ENCODE measurements at regions of chr5 and their contacts with region 1.

Region 1: DNA sequence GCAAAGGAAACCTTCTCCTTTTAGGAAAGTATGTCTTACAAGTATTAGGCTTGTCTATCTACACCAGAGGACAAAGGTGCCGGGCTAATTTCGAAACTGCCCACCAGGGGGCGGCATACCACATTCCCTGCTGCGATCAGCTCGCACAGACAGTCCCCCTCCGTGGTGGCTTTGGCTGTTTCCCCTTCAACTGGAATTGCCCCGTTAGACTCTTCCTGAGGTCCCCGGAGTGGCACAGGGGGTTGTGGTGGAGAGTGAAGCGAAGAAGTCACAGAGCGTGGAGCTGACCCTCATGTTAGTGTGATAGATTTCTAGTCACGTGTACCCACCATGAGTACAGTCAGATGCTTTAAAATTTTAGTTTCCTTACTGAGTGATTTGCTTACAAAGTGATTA is 17.5 kb downstream of the PTTG1 start:
- DNase-seq: peak; percentile 69
- ATAC-seq: peak; percentile 95
- H3K4me3 ChIP-seq: peak overlapping the region; percentile 13 to 60 (median 39)
- H3K27ac ChIP-seq: no peak overlapping the region
- H3K4me1 ChIP-seq: peaks cover 42% of the 10 kb centered on the region
- H3K27me3 ChIP-seq: peaks cover 0 to 1% of the 10 kb centered on the region in 2 experiments; a peak in 1 of 5 replicates
- CTCF ChIP-seq: peak; percentile 92
- EP300 ChIP-seq: no peak
- POLR2A ChIP-seq: no peak
- RAD21 ChIP-seq: peak; percentile 75

Region 2: DNA sequence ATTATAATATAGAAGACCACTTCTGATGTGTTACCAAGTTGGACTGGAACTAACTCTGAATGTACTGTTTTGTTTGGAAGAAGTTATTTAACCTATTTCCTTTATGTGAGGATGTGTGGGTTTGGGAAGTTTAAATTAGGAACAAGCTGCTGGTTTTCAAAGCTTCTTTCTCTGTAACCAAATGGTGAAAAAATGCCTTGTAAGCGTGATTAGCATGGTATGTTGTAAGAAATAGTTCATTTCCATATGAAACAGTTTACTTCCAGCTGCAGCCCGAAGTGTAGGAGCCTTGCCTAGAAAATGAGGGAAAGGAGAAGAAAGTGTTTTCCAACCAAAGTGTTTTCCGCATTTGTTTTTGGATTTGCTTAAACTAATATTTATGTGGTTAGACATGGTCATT is 394.2 kb before region 1 on chr5:
- CTCF ChIA-PET with region 1: no interaction called
- POLR2A ChIA-PET with region 1: no interaction called
- in situ Hi-C with region 1: no loop called
- intact Hi-C with region 1: no loop called
- DNase-seq: no peak
- ATAC-seq: no peak
- H3K4me3 ChIP-seq: no peak overlapping the region
- H3K27ac ChIP-seq: no peak overlapping the region
- H3K4me1 ChIP-seq: no peaks in the 10 kb centered on the region
- H3K27me3 ChIP-seq: no peaks in the 10 kb centered on the region
- CTCF ChIP-seq: no peak
- EP300 ChIP-seq: no peak
- POLR2A ChIP-seq: no peak
- RAD21 ChIP-seq: no peak

Region 3: GRCh38 chr5:160213537-160213936 is 225.7 kb before region 1 on chr5:
- CTCF ChIA-PET with region 1: no interaction called
- POLR2A ChIA-PET with region 1: no interaction called
- in situ Hi-C with region 1: no loop called
- intact Hi-C with region 1: no loop called
- DNase-seq: no peak
- ATAC-seq: peak; percentile 56; the same call in 1 of the 3 replicates
- H3K4me3 ChIP-seq: no peak overlapping the region
- H3K27ac ChIP-seq: no peak overlapping the region
- H3K4me1 ChIP-seq: no peaks in the 10 kb centered on the region
- H3K27me3 ChIP-seq: no peaks in the 10 kb centered on the region; a peak in 1 of 5 replicates
- CTCF ChIP-seq: no peak
- EP300 ChIP-seq: no peak
- POLR2A ChIP-seq: no peak
- RAD21 ChIP-seq: no peak

Region 4: DNA sequence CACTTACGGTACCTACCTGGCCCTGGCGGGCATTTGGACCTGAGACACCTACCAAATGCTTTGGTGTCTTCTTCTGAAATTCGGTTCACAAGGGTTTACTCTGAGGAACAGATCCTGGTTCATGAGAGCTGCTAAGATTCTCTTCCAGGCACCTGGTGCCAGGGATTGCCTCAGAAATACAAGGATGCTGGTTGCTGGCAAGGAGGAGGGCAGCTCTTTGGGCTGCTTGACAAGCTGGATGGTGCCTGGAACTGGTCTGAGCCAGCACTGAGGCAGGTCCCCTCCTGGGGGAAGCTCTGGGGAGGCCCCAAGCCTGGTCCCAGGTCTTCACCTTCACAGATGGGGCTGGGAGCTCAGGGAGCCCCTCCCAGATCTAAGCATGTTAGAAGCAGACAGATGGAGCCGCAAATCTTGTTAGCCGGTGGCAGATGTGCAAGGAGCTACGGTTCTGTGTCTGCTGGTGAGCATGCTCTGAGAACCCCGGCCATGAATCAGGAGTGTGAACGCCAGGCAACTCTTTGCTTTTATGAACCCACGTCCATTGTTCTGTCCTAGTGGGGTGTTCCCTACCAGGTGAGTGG is 193.6 kb before region 1 on chr5:
- CTCF ChIA-PET with region 1: no interaction called
- POLR2A ChIA-PET with region 1: no interaction called
- in situ Hi-C with region 1: no loop called
- intact Hi-C with region 1: no loop called
- DNase-seq: no peak
- ATAC-seq: peak; percentile 21; the same call in 1 of the 3 replicates
- H3K4me3 ChIP-seq: no peak overlapping the region
- H3K27ac ChIP-seq: no peak overlapping the region
- H3K4me1 ChIP-seq: no peaks in the 10 kb centered on the region
- H3K27me3 ChIP-seq: no peaks in the 10 kb centered on the region; a peak in 1 of 5 replicates
- CTCF ChIP-seq: no peak
- EP300 ChIP-seq: no peak
- POLR2A ChIP-seq: no peak
- RAD21 ChIP-seq: no peak

Region 5: GRCh38 chr5:160458806-160459800 is 19.9 kb after region 1 on chr5:
- CTCF ChIA-PET with region 1: interaction called, 14 read pairs
- POLR2A ChIA-PET with region 1: interaction called, 4 read pairs
- in situ Hi-C with region 1: no loop called
- intact Hi-C with region 1: loop called (anchors 1 kb)
- DNase-seq: no peak
- ATAC-seq: no peak
- H3K4me3 ChIP-seq: no peak overlapping the region
- H3K27ac ChIP-seq: no peak overlapping the region
- H3K4me1 ChIP-seq: peaks cover 50% of the 10 kb centered on the region
- H3K27me3 ChIP-seq: no peaks in the 10 kb centered on the region
- CTCF ChIP-seq: no peak
- EP300 ChIP-seq: no peak
- POLR2A ChIP-seq: no peak
- RAD21 ChIP-seq: no peak

Region 6: DNA sequence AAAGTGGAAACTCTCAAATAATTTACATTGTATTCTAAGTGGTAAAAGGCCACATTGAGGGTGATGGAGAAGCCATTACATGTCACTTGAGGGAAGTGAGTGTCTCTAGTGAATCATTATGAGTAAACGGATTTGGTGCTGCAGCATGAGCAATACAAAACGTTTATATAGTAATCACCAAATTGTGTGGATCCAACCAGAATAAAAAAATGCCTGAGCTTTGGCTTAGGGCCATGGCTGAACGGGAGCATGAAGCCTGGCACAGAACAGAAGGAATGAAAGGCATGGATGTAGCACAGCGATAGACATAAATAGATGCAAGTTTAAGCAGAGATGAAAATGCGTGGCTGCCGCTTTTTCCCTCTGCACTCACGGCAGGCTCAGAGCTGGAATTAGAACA is 40.7 kb after region 1 on chr5:
- CTCF ChIA-PET with region 1: interaction called, 3 read pairs
- POLR2A ChIA-PET with region 1: interaction called, 12 read pairs
- in situ Hi-C with region 1: no loop called
- intact Hi-C with region 1: loop called (anchors 1 kb)
- DNase-seq: no peak
- ATAC-seq: no peak
- H3K4me3 ChIP-seq: no peak overlapping the region
- H3K27ac ChIP-seq: no peak overlapping the region
- H3K4me1 ChIP-seq: peaks cover 80% of the 10 kb centered on the region
- H3K27me3 ChIP-seq: no peaks in the 10 kb centered on the region
- CTCF ChIP-seq: no peak
- EP300 ChIP-seq: no peak
- POLR2A ChIP-seq: no peak
- RAD21 ChIP-seq: no peak

Region 7: GRCh38 chr5:160508780-160509361 is 69.7 kb after region 1 on chr5:
- CTCF ChIA-PET with region 1: interaction called, 19 read pairs
- POLR2A ChIA-PET with region 1: no interaction called
- in situ Hi-C with region 1: loop called (anchors 5 kb)
- intact Hi-C with region 1: loop called (anchors 1 kb)
- DNase-seq: peak; percentile 76
- ATAC-seq: peak; percentile 89
- H3K4me3 ChIP-seq: no peak overlapping the region
- H3K27ac ChIP-seq: no peak overlapping the region
- H3K4me1 ChIP-seq: peaks cover 52% of the 10 kb centered on the region
- H3K27me3 ChIP-seq: no peaks in the 10 kb centered on the region; a peak in 1 of 5 replicates
- CTCF ChIP-seq: peak; percentile 92
- EP300 ChIP-seq: no peak
- POLR2A ChIP-seq: no peak
- RAD21 ChIP-seq: peak; percentile 88

Region 8: DNA sequence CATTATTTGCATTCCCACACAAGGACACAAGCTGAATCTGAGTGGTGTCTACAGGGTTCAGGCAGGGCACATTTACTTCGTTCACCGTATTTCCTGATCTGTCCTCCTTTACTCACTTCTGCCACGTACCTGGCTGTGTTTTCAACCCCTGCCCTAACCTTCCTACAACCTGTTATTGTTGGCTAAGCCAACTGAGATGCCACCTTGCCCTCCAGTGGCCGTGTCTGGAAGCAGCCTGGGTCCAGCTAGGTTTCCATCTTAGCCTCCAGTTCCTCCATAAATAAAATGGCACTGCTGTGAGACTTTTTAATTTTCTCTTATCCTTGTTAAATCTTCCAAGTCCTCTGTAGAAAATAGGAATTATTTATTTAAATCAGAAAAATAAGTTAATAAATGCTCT is 348.0 kb after region 1 on chr5:
- CTCF ChIA-PET with region 1: interaction called, 5 read pairs
- POLR2A ChIA-PET with region 1: no interaction called
- in situ Hi-C with region 1: loop called (anchors 10 kb)
- intact Hi-C with region 1: loop called (anchors 1 kb)
- DNase-seq: peak; percentile 9
- ATAC-seq: peak; percentile 86
- H3K4me3 ChIP-seq: no peak overlapping the region
- H3K27ac ChIP-seq: no peak overlapping the region
- H3K4me1 ChIP-seq: no peaks in the 10 kb centered on the region
- H3K27me3 ChIP-seq: no peaks in the 10 kb centered on the region
- CTCF ChIP-seq: peak; percentile 64
- EP300 ChIP-seq: no peak
- POLR2A ChIP-seq: no peak
- RAD21 ChIP-seq: peak; percentile 44; the same call in 1 of the 2 replicates